Activated CD4-positive, alpha-beta T cell treated with anti-CD3 and anti-CD28 coated beads, Interleukin-2, amount 10 ng/mL, durations not matched to agents 7 days and 5 days (primary cell): ENCODE measurements at regions of chr2 and their contacts with region 1.

Region 1: GRCh38 chr2:29583544-29584156 is 337.7 kb downstream of the ALK start:
- DNase-seq: no peak
- H3K4me3 Mint-ChIP-seq: no peak overlapping the region
- H3K27ac Mint-ChIP-seq: no peak overlapping the region
- H3K4me1 Mint-ChIP-seq: no peaks in the 10 kb centered on the region
- H3K27me3 Mint-ChIP-seq: peaks cover 3% of the 10 kb centered on the region

Region 2: GRCh38 chr2:29541781-29542180 is 41.9 kb before region 1 on chr2:
- CTCF ChIA-PET with region 1: no interaction called
- POLR2A ChIA-PET with region 1: interaction called, 10 read pairs
- DNase-seq: no peak
- H3K4me3 Mint-ChIP-seq: no peak overlapping the region
- H3K27ac Mint-ChIP-seq: no peak overlapping the region
- H3K4me1 Mint-ChIP-seq: no peaks in the 10 kb centered on the region
- H3K27me3 Mint-ChIP-seq: peaks cover 21% of the 10 kb centered on the region

Region 3: GRCh38 chr2:29618024-29618423 is 34.4 kb after region 1 on chr2:
- CTCF ChIA-PET with region 1: no interaction called
- POLR2A ChIA-PET with region 1: no interaction called
- DNase-seq: no peak
- H3K4me3 Mint-ChIP-seq: no peak overlapping the region
- H3K27ac Mint-ChIP-seq: no peak overlapping the region
- H3K4me1 Mint-ChIP-seq: no peaks in the 10 kb centered on the region
- H3K27me3 Mint-ChIP-seq: peaks cover 3% of the 10 kb centered on the region